ENCODE measurements at regions of chr19 and their contacts with region 1.

Region 1: GRCh38 chr19:984165-984967 is at the start of gene WDR18:
- DNase-seq: peak; percentile 68 to 94 (median 90)
- ATAC-seq: peak; percentile 85
- H3K4me3 ChIP-seq: peak within 1 kb of the TSS; percentile 92 to 93
- H3K4me3 Mint-ChIP-seq: peak within 1 kb of the TSS; percentile 91
- H3K27ac ChIP-seq: peak within 1 kb of the TSS; percentile 78 to 87
- H3K27ac Mint-ChIP-seq: peak within 1 kb of the TSS; percentile 86
- H3K4me1 ChIP-seq: peaks cover 19% of the 10 kb centered on the region
- H3K4me1 Mint-ChIP-seq: peaks cover 12% of the 10 kb centered on the region
- H3K27me3 ChIP-seq: no peaks in the 10 kb centered on the region
- H3K27me3 Mint-ChIP-seq: no peaks in the 10 kb centered on the region
- CTCF ChIP-seq: no peak
- total RNA-seq, gene WDR18: 20.6 to 22.7 TPM

Region 2: GRCh38 chr19:695352-695949 is 288.9 kb before region 1 on chr19 and contains the start of gene PRSS57:
- CTCF ChIA-PET with region 1: no interaction called
- POLR2A ChIA-PET with region 1: no interaction called
- intact Hi-C with region 1: no loop called
- DNase-seq: no peak
- ATAC-seq: no peak
- H3K4me3 ChIP-seq: no peak within 1 kb of the TSS
- H3K4me3 Mint-ChIP-seq: no peak within 1 kb of the TSS
- H3K27ac ChIP-seq: no peak within 1 kb of the TSS
- H3K27ac Mint-ChIP-seq: no peak within 1 kb of the TSS
- H3K4me1 ChIP-seq: peaks cover 10% of the 10 kb centered on the region
- H3K4me1 Mint-ChIP-seq: peaks cover 4% of the 10 kb centered on the region
- H3K27me3 ChIP-seq: peaks cover 4 to 16% of the 10 kb centered on the region in 2 experiments
- H3K27me3 Mint-ChIP-seq: peaks cover 19% of the 10 kb centered on the region
- CTCF ChIP-seq: no peak
- total RNA-seq, gene PRSS57: not detected

Region 3: GRCh38 chr19:771332-771785 is 213.0 kb before region 1 on chr19:
- CTCF ChIA-PET with region 1: interaction called, 6 read pairs
- POLR2A ChIA-PET with region 1: no interaction called
- intact Hi-C with region 1: loop called (anchors 1 kb)
- DNase-seq: peak in 2 of 9 experiments; percentile 47 to 56
- ATAC-seq: no peak
- H3K4me3 ChIP-seq: no peak overlapping the region
- H3K4me3 Mint-ChIP-seq: no peak overlapping the region
- H3K27ac ChIP-seq: no peak overlapping the region
- H3K27ac Mint-ChIP-seq: no peak overlapping the region
- H3K4me1 ChIP-seq: no peaks in the 10 kb centered on the region
- H3K4me1 Mint-ChIP-seq: peaks cover 2% of the 10 kb centered on the region
- H3K27me3 ChIP-seq: peaks cover 0 to 4% of the 10 kb centered on the region in 2 experiments
- H3K27me3 Mint-ChIP-seq: peaks cover 6% of the 10 kb centered on the region
- CTCF ChIP-seq: no peak

Region 4: DNA sequence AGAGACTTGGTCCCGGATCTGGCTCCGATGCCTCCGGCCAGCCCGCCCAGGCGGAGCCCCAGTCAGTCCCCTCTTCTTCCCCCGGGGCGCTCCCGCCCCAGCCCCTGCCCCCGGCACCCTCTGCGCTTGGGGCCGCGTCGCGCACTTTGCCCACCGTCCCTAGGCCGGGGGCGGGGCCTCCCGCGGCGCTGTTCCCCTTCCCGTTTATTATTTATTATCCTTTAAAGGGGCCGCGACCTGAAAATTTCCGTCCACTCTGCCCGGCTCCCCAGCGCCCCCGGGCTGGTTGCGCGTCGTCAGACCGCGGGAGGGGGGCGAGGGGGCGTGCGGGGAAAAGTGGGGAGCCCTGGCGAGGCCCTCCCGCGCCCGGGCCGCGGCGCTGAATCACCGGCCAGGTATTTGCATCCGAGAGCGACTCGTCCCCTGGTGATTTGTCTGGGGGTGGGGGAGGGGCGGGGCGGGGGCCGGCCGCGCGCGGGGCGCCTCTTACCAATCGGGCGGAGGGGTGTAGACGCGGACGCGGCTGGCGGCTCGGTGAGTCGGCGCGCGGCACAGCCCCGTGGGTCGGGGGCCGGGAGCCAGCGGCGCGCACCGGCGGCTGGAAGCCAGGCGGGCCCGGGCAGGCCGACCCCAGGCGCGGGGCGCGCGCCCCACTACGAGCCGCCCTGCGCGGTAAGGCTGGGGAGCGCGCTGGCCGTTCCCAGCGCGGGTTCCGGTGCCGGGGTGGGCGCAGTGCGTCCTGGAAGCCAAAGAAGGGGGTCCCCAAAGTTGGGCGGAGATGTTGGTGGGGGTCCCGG is 58.6 kb before region 1 on chr19 and contains the start of gene ARID3A:
- CTCF ChIA-PET with region 1: interaction called, 175 read pairs
- POLR2A ChIA-PET with region 1: interaction called, 28 read pairs
- intact Hi-C with region 1: loop called in 1 of 2 experiments (anchors 1 kb)
- DNase-seq: peak in 8 of 9 experiments; percentile 62 to 88 (median 76)
- ATAC-seq: peak; percentile 67
- H3K4me3 ChIP-seq: peak within 1 kb of the TSS; percentile 73 to 78
- H3K4me3 Mint-ChIP-seq: peak within 1 kb of the TSS; percentile 80
- H3K27ac ChIP-seq: peak within 1 kb of the TSS; percentile 42 to 74
- H3K27ac Mint-ChIP-seq: no peak within 1 kb of the TSS
- H3K4me1 ChIP-seq: peaks cover 20% of the 10 kb centered on the region
- H3K4me1 Mint-ChIP-seq: peaks cover 17% of the 10 kb centered on the region
- H3K27me3 ChIP-seq: no peaks in the 10 kb centered on the region
- H3K27me3 Mint-ChIP-seq: no peaks in the 10 kb centered on the region
- CTCF ChIP-seq: no peak
- total RNA-seq, gene ARID3A: 2.0 to 2.7 TPM

Region 5: DNA sequence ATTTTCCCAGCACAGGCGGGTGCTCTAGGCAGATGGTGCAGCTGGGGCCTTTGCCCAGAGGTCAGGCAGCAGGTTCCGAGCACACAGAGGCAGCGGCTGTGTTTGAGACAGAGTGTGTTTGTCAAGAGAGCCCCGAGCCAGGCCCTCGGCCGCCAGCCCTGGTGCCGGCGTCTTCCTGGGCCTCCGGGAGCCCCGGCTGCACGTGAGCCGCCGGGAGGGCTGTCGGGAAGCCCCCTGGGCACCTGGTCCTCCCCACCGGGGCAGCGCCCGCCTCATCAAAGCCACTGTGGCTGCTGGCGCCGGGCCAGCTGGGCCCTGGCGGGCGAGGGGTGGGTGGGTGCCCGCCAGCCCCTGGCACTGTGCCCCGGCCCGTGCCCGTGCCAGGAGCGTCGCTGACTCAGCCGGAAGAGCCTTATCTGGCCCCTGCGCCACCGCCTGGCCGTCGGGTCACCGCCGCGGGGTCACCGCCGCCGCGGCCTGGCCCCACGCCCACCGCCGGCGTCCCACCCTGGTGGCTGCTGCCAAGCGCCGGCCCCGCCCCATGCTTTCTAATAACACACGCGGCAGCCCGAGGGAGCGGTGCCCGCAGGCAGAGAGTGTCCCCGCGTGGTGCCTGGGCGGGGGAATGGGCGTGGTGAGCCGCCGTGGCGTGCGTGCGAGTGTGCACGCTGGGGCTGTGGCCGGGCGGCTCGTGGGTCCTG is 43.6 kb before region 1 on chr19:
- CTCF ChIA-PET with region 1: interaction called, 22 read pairs
- POLR2A ChIA-PET with region 1: interaction called, 5 read pairs
- intact Hi-C with region 1: loop called in 1 of 2 experiments (anchors 5 kb)
- DNase-seq: peak; percentile 41 to 94 (median 78)
- ATAC-seq: peak; percentile 70
- H3K4me3 ChIP-seq: peak overlapping the region; percentile 36 to 53
- H3K4me3 Mint-ChIP-seq: peak overlapping the region; percentile 78
- H3K27ac ChIP-seq: peak overlapping the region; percentile 7 to 11
- H3K27ac Mint-ChIP-seq: no peak overlapping the region
- H3K4me1 ChIP-seq: peaks cover 33% of the 10 kb centered on the region
- H3K4me1 Mint-ChIP-seq: peaks cover 24% of the 10 kb centered on the region
- H3K27me3 ChIP-seq: no peaks in the 10 kb centered on the region
- H3K27me3 Mint-ChIP-seq: no peaks in the 10 kb centered on the region
- CTCF ChIP-seq: no peak

Region 6: GRCh38 chr19:1001538-1002166 is 17.3 kb after region 1 on chr19:
- CTCF ChIA-PET with region 1: interaction called, 13 read pairs
- POLR2A ChIA-PET with region 1: interaction called, 10 read pairs
- intact Hi-C with region 1: loop called in 1 of 2 experiments (anchors 1 kb)
- DNase-seq: peak; percentile 57 to 84 (median 75)
- ATAC-seq: peak; percentile 78
- H3K4me3 ChIP-seq: no peak overlapping the region
- H3K4me3 Mint-ChIP-seq: no peak overlapping the region
- H3K27ac ChIP-seq: no peak overlapping the region
- H3K27ac Mint-ChIP-seq: no peak overlapping the region
- H3K4me1 ChIP-seq: peaks cover 24% of the 10 kb centered on the region
- H3K4me1 Mint-ChIP-seq: peaks cover 12% of the 10 kb centered on the region
- H3K27me3 ChIP-seq: peaks cover 18 to 32% of the 10 kb centered on the region in 2 experiments
- H3K27me3 Mint-ChIP-seq: peaks cover 15% of the 10 kb centered on the region
- CTCF ChIP-seq: peak; percentile 87

Region 7: GRCh38 chr19:1087813-1088415 is 103.5 kb after region 1 on chr19:
- CTCF ChIA-PET with region 1: interaction called, 6 read pairs
- POLR2A ChIA-PET with region 1: interaction called, 21 read pairs
- intact Hi-C with region 1: no loop called
- DNase-seq: peak in 5 of 9 experiments; percentile 61 to 82 (median 68)
- ATAC-seq: peak; percentile 21
- H3K4me3 ChIP-seq: no peak overlapping the region
- H3K4me3 Mint-ChIP-seq: peak overlapping the region; percentile 64
- H3K27ac ChIP-seq: peak overlapping the region; percentile 29 to 74
- H3K27ac Mint-ChIP-seq: peak overlapping the region; percentile 95
- H3K4me1 ChIP-seq: peaks cover 90% of the 10 kb centered on the region
- H3K4me1 Mint-ChIP-seq: peaks cover 44% of the 10 kb centered on the region
- H3K27me3 ChIP-seq: no peaks in the 10 kb centered on the region
- H3K27me3 Mint-ChIP-seq: no peaks in the 10 kb centered on the region
- CTCF ChIP-seq: no peak

Measured in CD8-positive, alpha-beta T cell (primary cell).